Left cardiac atrium (tissue), 4 donors: ENCODE measurements at regions of chr3 and their contacts with region 1.

Region 1: DNA sequence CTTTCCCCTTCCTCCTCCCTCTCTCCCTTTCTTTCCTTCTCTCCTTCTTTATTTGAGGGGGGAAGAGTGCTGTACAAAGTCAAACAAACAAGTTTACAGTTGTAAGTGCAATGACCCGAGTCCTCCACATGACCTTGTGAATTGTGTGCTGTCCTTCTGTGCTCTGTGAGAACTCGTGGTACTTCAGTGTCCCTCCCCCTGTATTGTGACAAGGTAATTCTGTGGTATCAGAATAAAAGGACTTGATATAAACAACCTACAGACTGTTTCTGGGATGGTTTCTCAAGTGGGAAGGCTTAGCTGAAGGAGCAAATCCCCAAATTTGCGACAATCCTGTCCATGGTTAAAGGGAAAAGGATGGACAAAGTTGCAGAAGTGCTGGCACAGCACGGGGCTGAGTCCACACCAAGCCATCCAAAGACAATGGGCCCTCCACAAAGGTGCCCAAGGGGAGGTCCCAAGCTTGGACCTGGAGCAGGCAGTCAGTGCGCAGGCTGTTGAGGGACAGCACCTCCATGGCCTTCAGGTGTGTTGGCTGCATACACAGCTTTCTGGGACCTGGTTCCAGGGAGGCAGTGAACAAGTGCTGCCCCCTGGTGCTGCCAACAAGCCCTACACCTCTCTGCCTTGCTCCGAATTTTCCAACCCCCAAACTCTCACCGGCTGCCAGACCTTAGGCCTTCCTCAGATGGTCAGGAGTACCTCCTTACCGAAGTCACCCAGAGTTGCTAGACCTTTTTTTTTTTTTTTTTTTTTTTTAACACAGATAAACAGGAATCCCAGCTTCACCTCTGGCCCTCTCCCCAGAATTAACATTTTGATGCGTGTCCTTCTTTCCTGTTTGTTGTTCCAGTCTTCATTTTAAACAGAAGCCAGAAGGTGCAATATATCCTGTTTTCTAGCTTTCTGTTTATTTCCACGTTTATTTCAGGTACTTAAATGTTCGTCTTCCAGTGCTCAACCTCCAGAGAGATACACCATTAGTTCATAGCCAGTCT is 2.6 kb upstream of the APEH start:
- DNase-seq: peak; percentile 65
- ATAC-seq: peak in 1 of 2 donors; percentile 2

Region 2: GRCh38 chr3:49276475-49277382 is 394.9 kb before region 1 on chr3 and contains the start of gene C3orf62:
- intact Hi-C with region 1: no loop called
- DNase-seq: peak; percentile 95
- ATAC-seq: peak; percentile 96 to 97
- total RNA-seq, gene C3orf62: 3.2 to 3.4 TPM

Region 3: GRCh38 chr3:49539659-49540560 is 131.7 kb before region 1 on chr3:
- intact Hi-C with region 1: loop called (anchors 1 to 5 kb)
- DNase-seq: peak; percentile 95
- ATAC-seq: peak; percentile 96 to 98

Region 4: GRCh38 chr3:49759226-49759625 is 87.6 kb after region 1 on chr3:
- intact Hi-C with region 1: no loop called
- DNase-seq: no peak
- ATAC-seq: peak in 1 of 2 donors; percentile 26